WTC11 (cell line): ENCODE measurements at regions of chr15 and their contacts with region 1.

Region 1: GRCh38 chr15:74307827-74308644 is 59.4 kb downstream of the CYP11A1 start:
- DNase-seq: peak; percentile 63
- ATAC-seq: peak; percentile 66
- H3K4me3 Mint-ChIP-seq: peak overlapping the region; percentile 31
- H3K27ac Mint-ChIP-seq: no peak overlapping the region
- H3K4me1 Mint-ChIP-seq: peaks cover 71% of the 10 kb centered on the region
- H3K27me3 Mint-ChIP-seq: peaks cover 32% of the 10 kb centered on the region
- CTCF ChIP-seq: peak; percentile 16; the same call in 1 of the 2 replicates

Region 2: GRCh38 chr15:74036271-74037170 is 271.5 kb before region 1 on chr15:
- CTCF ChIA-PET with region 1: interaction called, 16 read pairs
- POLR2A ChIA-PET with region 1: no interaction called
- DNase-seq: peak; percentile 86
- ATAC-seq: peak; percentile 86
- H3K4me3 Mint-ChIP-seq: no peak overlapping the region
- H3K27ac Mint-ChIP-seq: peak overlapping the region; percentile 31
- H3K4me1 Mint-ChIP-seq: peaks cover 39% of the 10 kb centered on the region
- H3K27me3 Mint-ChIP-seq: no peaks in the 10 kb centered on the region
- CTCF ChIP-seq: peak; percentile 29; the same call in 1 of the 2 replicates

Region 3: GRCh38 chr15:74144153-74144775 is 163.8 kb before region 1 on chr15:
- CTCF ChIA-PET with region 1: interaction called, 48 read pairs
- POLR2A ChIA-PET with region 1: no interaction called
- DNase-seq: no peak
- ATAC-seq: peak; percentile 92
- H3K4me3 Mint-ChIP-seq: no peak overlapping the region
- H3K27ac Mint-ChIP-seq: no peak overlapping the region
- H3K4me1 Mint-ChIP-seq: peaks cover 29% of the 10 kb centered on the region
- H3K27me3 Mint-ChIP-seq: peaks cover 10% of the 10 kb centered on the region
- CTCF ChIP-seq: no peak

Region 4: DNA sequence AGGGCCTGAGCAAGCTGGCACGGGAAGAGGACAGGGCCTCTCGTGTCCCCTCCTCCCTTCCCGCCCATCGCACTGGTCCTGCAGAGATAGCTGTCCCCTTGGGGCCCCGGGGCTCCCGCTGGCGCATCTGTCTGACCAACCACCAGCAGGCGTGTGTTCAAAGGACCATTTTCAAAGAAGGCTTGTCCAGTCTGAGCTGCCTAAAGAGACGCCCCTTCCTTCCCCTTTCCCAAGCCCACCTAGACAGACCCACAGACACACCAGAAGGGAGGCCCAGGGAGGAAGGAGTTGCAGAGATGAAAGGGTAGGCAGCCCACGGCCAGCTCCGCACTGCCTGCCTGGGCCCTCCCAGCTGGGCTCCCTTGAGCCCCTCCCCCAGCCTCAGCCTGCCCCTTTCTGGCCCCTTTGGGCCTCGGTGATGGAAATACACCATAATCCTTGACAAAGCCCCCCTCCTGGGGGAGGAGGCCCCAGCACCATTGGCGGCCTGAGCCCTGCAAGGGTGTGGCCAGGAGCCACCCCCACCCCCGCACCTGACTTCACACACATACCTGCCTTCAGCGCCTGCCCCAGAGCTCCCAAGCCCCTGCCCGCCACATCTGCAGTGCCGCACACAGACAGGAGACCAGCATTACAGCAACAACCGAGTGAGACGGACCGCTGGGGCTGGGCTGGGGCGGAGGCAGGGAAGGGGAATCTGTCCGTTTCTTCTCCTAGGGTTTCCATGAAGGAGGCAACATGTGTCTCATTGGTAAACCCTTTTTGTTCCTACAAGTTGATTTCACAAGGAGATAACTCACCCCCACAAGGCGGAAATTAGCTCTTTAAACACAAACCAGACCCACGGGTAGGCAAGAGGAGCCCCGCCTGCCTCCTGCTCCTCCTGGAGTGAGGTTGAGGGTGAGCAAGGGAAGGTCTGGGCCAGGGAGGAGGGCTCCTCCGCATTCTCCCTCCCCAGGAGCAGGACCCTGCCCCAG is 105.3 kb before region 1 on chr15 and contains the start of gene STRA6:
- CTCF ChIA-PET with region 1: interaction called, 78 read pairs
- POLR2A ChIA-PET with region 1: interaction called, 3 read pairs
- DNase-seq: peak; percentile 93
- ATAC-seq: peak; percentile 91
- H3K4me3 Mint-ChIP-seq: peak within 1 kb of the TSS; percentile 80
- H3K27ac Mint-ChIP-seq: peak within 1 kb of the TSS; percentile 97
- H3K4me1 Mint-ChIP-seq: peaks cover 67% of the 10 kb centered on the region
- H3K27me3 Mint-ChIP-seq: peaks cover 17% of the 10 kb centered on the region
- CTCF ChIP-seq: no peak
- total RNA-seq, gene STRA6: 20.1 to 23.2 TPM (median 21.7 TPM) in 3 replicates

Region 5: DNA sequence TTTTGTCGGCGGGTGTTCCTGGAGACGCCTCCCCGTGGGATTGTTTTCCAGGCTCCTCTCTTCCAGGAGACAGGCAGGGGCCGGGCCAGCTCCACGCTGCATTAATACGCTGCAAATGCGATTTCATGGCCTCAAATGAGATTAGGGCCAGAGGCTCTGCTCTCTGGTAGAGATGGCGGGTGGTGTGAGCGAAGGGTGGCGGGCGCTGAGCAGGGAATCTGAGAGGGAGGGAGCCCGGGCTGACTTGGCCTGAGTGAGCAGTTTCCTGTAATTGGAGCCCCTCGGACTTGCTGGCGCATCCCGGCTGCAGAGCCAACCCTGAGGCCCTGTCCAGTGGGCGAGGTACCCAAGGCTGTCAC is 79.3 kb before region 1 on chr15:
- CTCF ChIA-PET with region 1: interaction called, 53 read pairs
- POLR2A ChIA-PET with region 1: no interaction called
- DNase-seq: peak; percentile 25
- ATAC-seq: peak; percentile 45
- H3K4me3 Mint-ChIP-seq: no peak overlapping the region
- H3K27ac Mint-ChIP-seq: no peak overlapping the region
- H3K4me1 Mint-ChIP-seq: peaks cover 32% of the 10 kb centered on the region
- H3K27me3 Mint-ChIP-seq: peaks cover 76% of the 10 kb centered on the region
- CTCF ChIP-seq: no peak

Region 6: DNA sequence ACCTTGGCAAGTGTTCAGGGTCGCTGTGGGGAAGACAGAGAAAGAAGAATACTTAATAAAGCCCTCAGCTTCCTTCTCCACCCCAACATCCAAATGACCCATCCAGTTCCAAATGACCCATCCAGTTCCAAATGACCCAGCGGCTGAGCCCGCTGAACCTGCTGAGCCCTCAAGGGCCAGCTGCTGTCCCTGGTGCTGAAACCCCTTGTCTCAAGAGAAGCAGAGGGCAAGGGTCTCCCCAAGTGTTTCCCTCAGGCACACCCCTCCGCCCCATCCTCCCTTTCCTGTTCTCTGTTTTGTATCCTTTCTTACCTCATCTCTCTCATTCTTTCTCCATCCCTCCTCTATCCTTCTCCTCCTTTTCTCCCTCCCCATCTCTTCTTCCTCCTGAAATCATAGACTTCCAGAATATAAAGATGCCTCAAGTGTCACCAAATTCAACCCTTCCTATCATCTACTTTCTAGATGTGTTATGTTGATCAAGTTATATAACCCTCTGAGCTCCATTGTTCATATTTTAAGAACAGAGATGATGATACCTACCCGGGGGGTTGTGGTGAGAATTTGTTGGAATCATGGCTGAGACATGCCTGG is 42.9 kb before region 1 on chr15:
- CTCF ChIA-PET with region 1: interaction called, 41 read pairs
- POLR2A ChIA-PET with region 1: interaction called, 3 read pairs
- DNase-seq: peak; percentile 86
- ATAC-seq: peak; percentile 65
- H3K4me3 Mint-ChIP-seq: no peak overlapping the region
- H3K27ac Mint-ChIP-seq: no peak overlapping the region
- H3K4me1 Mint-ChIP-seq: peaks cover 17% of the 10 kb centered on the region
- H3K27me3 Mint-ChIP-seq: peaks cover 4% of the 10 kb centered on the region; the same call in 1 of the 2 replicates
- CTCF ChIP-seq: no peak

Region 7: DNA sequence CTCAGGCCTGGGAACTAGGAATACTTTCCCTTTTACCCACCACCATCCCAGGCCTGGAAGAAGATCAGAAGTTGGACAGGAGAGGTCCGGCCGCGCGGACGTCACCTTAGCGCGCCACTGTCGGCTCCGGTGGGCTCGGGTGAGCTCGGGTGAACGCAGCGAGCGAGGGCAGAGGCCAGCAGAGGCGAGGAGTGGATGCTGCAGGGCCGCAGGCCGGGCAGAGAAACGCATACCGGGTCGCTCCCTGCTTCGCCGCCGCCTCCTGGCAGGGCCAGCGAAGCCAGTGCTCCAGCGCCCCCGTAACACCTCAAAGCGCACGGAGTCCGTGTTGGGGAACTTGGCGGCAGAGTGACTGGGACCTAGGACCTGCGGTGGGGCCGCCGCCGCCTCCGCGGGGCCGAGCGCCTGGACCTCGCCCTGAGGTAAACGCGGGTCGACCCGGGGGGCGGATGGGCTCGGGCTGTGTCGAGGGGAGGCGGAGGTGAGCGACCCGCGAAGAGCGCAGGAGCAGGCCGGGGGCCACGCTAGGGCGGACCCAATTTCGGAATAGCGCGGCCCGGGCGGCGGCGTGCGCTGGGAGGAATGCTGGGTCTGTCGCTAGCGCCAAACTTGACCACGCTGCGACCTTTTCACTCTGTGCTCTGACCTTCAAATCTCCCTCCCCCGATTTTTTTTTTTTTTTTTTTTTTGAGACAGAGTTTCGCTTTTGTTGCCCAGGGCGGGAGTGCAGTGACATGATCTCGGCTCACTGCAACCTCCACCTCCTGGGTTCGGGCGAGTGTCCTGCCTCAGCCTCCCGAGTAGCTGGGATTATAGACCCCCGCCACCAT is 57.8 kb after region 1 on chr15:
- CTCF ChIA-PET with region 1: interaction called, 10 read pairs
- POLR2A ChIA-PET with region 1: no interaction called
- DNase-seq: peak; percentile 67
- ATAC-seq: peak; percentile 75
- H3K4me3 Mint-ChIP-seq: peak overlapping the region; percentile 72
- H3K27ac Mint-ChIP-seq: peak overlapping the region; percentile 20; the same call in 1 of the 2 replicates
- H3K4me1 Mint-ChIP-seq: peaks cover 22% of the 10 kb centered on the region
- H3K27me3 Mint-ChIP-seq: peaks cover 29% of the 10 kb centered on the region
- CTCF ChIP-seq: no peak